Activated CD4-positive, alpha-beta T cell treated with anti-CD3 and anti-CD28 coated beads, Interleukin-2, amount 10 ng/mL, durations not matched to agents 24 days and 14 days (primary cell): ENCODE measurements at regions of chr2 and their contacts with region 1.

Region 1: GRCh38 chr2:24971536-24972314 is at the start of gene DNAJC27:
- DNase-seq: peak; percentile 99
- H3K4me3 Mint-ChIP-seq: peak within 1 kb of the TSS; percentile 96
- H3K27ac Mint-ChIP-seq: peak within 1 kb of the TSS; percentile 100
- H3K4me1 Mint-ChIP-seq: peaks cover 13% of the 10 kb centered on the region
- H3K27me3 Mint-ChIP-seq: no peaks in the 10 kb centered on the region
- total RNA-seq, gene DNAJC27: 6.9 and 7.0 TPM in 2 replicates

Region 2: GRCh38 chr2:24409700-24410556 is 561.8 kb before region 1 on chr2:
- intact Hi-C with region 1: loop called (anchors 2 kb)
- DNase-seq: peak; percentile 82
- H3K4me3 Mint-ChIP-seq: no peak overlapping the region
- H3K27ac Mint-ChIP-seq: no peak overlapping the region
- H3K4me1 Mint-ChIP-seq: peaks cover 2% of the 10 kb centered on the region
- H3K27me3 Mint-ChIP-seq: peaks cover 4% of the 10 kb centered on the region

Region 3: DNA sequence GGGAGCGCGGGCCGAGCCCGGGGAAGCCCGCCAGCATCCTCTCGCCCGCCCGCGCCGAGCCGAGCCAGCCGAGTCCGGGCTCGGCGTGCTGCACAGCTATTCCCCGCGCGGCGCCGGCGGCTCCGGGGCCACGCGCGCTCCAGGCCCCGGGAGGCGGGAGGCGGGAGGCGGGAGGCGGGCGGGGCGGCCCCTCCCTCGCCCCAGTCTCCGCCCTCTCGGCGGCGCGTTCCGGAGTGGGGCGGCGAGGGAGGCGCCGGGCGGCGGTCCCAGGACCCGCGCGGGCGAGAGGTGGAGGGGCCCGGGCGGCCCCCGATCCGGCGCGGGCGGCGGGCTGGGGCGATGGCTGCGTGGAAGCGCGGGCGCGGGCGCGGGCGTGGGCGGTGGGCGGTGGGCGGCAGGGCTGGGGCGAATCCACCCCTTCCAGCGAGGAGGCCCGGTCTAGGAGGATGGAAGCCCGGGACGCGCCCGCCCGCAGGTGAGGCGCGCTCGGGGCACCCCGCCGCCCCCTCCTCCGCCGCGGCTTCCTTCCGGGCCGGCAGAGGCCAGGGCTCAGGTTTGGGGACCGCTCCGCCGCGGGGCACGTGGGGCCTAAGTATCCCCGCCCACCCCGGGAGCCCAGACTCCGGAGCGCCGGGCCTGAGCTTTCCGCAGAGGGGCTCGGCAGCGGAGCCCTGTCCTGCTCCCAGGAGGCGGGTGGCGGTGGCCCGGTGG is 51.5 kb before region 1 on chr2 and contains the start of gene ADCY3:
- intact Hi-C with region 1: loop called (anchors 1 kb)
- DNase-seq: peak; percentile 90
- H3K4me3 Mint-ChIP-seq: peak within 1 kb of the TSS; percentile 90
- H3K27ac Mint-ChIP-seq: peak within 1 kb of the TSS; percentile 69
- H3K4me1 Mint-ChIP-seq: peaks cover 29% of the 10 kb centered on the region
- H3K27me3 Mint-ChIP-seq: peaks cover 6% of the 10 kb centered on the region
- total RNA-seq, gene ADCY3: 103 and 108 TPM in 2 replicates

Region 4: DNA sequence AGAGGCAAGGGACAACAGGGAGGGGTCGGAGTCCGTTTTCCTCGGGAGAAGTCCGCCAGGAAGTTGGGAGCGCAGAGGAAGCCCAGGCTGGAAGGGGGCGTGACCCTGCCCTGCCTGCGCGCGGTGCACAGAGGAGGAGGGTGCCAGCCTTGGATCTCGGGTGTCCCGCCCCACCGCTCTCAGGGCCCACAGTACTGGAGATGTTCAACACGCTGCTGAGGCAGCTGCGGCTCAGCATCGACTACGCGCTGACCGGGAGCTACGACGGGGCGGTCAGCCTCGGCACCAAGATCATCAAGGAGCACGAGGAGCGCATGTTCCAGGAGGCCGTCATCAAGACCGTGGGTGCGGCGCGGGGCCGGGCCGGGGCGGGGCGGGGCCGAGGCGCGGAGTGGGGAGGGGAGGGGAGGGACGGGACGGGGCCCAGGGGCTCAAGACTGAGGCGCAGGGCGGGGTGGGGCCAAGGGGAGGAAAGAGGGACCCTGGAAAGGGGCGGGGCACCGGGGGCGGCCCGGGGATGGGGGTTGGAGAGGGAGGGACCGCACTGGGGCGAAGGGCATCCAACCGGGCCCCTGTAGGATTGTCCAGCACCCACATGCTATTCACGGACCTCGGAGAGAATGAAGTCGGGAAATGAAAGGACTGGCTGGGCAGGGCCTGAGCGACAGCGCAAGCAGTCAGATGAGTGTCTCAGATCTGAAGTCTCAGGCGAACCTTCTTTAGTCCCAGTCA is 160.0 kb after region 1 on chr2:
- intact Hi-C with region 1: loop called (anchors 1 kb)
- DNase-seq: peak; percentile 70
- H3K4me3 Mint-ChIP-seq: peak overlapping the region; percentile 77
- H3K27ac Mint-ChIP-seq: no peak overlapping the region
- H3K4me1 Mint-ChIP-seq: peaks cover 15% of the 10 kb centered on the region
- H3K27me3 Mint-ChIP-seq: peaks cover 57% of the 10 kb centered on the region